ENCODE measurements at regions of chr17 and their contacts with region 1.

Region 1: DNA sequence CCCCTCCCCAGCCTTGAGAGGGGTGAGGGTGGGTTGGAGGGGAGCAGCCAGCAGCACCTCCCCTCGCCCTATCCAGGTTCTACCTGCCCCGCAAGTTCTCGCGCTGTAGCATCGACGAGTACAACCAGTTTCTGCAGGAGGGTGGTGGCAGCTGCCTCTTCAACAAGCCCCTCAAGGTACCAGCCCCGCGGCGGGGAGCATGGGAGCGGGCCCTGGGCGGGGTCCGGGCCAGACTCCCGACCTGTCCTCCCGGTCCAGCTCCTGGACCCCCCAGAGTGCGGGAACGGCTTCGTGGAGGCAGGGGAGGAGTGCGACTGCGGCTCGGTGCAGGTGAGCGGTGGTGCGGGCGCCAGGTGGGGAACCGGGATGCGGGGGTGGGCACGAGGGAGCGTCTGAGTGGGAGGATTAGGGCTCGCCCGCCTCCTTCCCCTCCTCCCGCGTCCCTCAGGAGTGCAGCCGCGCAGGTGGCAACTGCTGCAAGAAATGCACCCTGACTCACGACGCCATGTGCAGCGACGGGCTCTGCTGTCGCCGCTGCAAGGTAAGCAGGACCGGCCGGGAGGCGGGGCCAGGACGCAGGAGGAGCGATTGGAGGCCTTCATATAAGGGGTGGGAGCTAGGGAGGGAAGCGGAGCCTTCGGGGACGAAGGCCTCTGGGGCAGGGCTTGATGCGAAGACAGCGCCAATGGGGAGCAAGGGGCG is 16.5 kb downstream of the ADAM11 start:
- DNase-seq: peak; percentile 97
- H3K4me3 ChIP-seq: peak overlapping the region; percentile 34
- H3K27ac ChIP-seq: no peak overlapping the region
- H3K4me1 ChIP-seq: no peaks in the 10 kb centered on the region
- H3K27me3 ChIP-seq: no peaks in the 10 kb centered on the region
- CTCF ChIP-seq: no peak

Region 2: DNA sequence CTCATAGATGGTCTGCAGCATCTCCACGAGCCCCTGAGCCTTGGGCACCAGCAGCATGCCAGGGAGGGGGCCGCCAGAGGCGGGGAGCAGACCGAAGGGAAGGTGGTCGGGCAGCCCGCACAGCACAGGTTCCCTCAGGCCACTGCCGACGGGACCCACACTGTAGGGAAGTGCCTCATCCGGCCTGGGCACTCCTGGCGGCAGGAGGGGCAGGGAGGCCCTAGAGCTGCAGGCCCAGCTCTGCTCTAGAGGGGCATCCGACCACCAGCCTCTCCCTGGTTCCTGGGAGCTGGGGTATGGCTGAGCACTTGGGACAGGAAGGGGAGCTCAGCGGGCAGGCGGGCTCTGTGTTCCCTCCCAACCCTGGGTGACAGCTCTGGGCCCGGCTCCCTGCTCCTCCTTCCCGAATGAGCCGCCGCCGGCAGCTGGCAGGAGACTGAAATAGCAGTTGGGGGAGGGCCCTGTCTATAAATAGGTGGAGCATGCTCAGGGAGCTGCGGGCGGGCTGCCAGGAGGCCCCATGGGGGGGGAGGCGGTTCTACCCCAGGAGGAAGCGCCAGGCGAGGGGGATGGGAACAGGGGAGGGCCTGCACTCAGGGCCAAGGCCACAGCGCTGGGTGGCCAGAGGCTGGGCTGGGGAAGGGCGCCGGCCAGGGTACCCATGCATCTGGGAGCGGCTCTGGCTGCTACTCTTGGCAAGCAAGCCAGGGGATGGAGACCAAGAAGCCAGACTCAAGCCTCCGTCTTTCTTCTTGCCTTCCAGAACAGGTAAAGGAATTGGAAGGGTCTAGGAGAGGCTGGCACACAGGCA is 664.3 kb before region 1 on chr17:
- CTCF ChIA-PET with region 1: no interaction called
- POLR2A ChIA-PET with region 1: interaction called, 11 read pairs
- intact Hi-C with region 1: no loop called
- DNase-seq: peak; percentile 91
- H3K4me3 ChIP-seq: peak overlapping the region; percentile 33
- H3K27ac ChIP-seq: peak overlapping the region; percentile 59
- H3K4me1 ChIP-seq: peaks cover 38% of the 10 kb centered on the region
- H3K27me3 ChIP-seq: no peaks in the 10 kb centered on the region
- CTCF ChIP-seq: no peak

Region 3: GRCh38 chr17:44804302-44805089 is 29.2 kb after region 1 on chr17:
- CTCF ChIA-PET with region 1: no interaction called
- POLR2A ChIA-PET with region 1: no interaction called
- intact Hi-C with region 1: no loop called
- DNase-seq: no peak
- H3K4me3 ChIP-seq: no peak overlapping the region
- H3K27ac ChIP-seq: no peak overlapping the region
- H3K4me1 ChIP-seq: no peaks in the 10 kb centered on the region
- H3K27me3 ChIP-seq: no peaks in the 10 kb centered on the region
- CTCF ChIP-seq: no peak

Region 4: GRCh38 chr17:44864866-44865660 is 89.8 kb after region 1 on chr17:
- CTCF ChIA-PET with region 1: interaction called, 3 read pairs
- POLR2A ChIA-PET with region 1: no interaction called
- intact Hi-C with region 1: loop called (anchors 1 kb)
- DNase-seq: peak; percentile 68
- H3K4me3 ChIP-seq: no peak overlapping the region
- H3K27ac ChIP-seq: no peak overlapping the region
- H3K4me1 ChIP-seq: no peaks in the 10 kb centered on the region
- H3K27me3 ChIP-seq: no peaks in the 10 kb centered on the region
- CTCF ChIP-seq: peak; percentile 63

Region 5: GRCh38 chr17:44919885-44920564 is 144.7 kb after region 1 on chr17:
- CTCF ChIA-PET with region 1: interaction called, 17 read pairs
- POLR2A ChIA-PET with region 1: no interaction called
- intact Hi-C with region 1: no loop called
- DNase-seq: peak; percentile 66
- H3K4me3 ChIP-seq: no peak overlapping the region
- H3K27ac ChIP-seq: no peak overlapping the region
- H3K4me1 ChIP-seq: no peaks in the 10 kb centered on the region
- H3K27me3 ChIP-seq: no peaks in the 10 kb centered on the region
- CTCF ChIP-seq: peak; percentile 66

Region 6: DNA sequence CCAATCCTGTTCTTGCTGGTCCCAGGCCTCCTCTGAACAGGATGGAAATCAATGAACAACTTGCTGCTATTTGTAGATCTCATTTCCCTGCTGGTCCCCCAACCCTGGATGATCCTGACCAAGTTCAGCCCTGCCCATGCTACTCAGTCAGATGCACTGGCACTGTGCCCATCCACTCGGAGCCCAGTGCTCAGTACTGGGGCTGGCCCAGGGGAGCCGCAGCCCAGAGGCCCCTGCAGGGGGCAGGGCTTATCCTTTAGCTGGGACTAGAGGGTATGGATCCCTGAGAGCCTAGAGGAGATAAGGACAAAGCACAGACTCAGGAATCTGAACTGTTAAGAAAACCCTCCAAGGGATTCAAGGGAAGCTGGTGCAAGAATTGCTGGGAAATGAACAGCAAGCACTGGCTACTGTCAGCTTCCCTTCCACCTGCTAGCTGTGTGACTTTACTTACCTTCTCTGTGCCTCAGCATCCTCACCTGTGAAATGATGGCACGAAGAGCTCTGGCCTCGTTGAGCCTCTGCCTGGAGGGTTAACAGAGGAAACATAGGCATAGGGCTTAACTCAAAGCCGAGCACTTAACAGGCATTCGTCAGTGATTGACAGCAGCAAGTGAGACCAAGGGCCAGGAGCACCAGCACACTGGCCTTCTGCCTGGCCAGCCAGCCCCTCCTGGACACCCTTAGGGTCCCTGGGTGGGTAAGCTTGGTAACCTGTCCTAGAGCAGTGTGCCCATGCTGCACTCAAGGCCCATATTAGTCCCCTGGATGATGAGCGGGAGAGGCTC is 222.6 kb after region 1 on chr17:
- CTCF ChIA-PET with region 1: no interaction called
- POLR2A ChIA-PET with region 1: no interaction called
- intact Hi-C with region 1: no loop called
- DNase-seq: peak; percentile 25
- H3K4me3 ChIP-seq: no peak overlapping the region
- H3K27ac ChIP-seq: no peak overlapping the region
- H3K4me1 ChIP-seq: no peaks in the 10 kb centered on the region
- H3K27me3 ChIP-seq: no peaks in the 10 kb centered on the region
- CTCF ChIP-seq: no peak

Region 7: DNA sequence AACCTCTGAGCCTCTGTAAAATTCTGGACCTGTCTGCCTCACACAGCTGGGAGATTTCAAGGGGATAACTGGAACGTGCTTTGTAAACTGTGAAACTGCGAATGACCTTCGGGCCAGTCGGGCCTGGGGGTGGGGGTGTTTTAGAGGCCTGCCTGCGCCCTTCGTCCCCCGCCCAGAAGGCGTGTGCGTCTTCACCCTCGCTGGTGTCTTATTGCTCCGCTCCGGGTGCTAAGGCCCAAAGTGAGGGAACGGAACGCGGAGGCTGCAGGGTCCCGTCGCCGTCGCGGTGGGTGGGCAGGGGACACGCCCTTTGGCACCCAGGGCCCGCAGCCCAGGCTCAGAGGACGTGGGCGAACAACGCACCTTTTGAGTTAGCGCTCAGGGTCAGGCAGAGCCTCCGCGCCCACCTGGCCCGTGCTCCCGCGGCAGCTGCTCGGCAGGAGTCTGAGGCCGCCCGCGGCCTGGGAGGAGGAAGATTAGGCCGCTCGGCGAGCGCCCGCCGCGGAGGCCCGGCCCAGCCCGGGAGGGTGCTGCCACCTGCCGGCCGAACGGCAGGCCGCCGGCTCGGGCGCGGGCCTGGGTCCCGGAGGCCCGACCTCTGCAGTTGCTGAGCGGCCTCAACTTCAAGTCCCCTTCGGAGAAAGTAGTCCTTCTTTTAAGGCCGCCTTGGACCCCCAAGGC is 246.5 kb after region 1 on chr17:
- CTCF ChIA-PET with region 1: interaction called, 3 read pairs
- POLR2A ChIA-PET with region 1: no interaction called
- intact Hi-C with region 1: loop called (anchors 5 kb)
- DNase-seq: peak; percentile 60
- H3K4me3 ChIP-seq: peak overlapping the region; percentile 36
- H3K27ac ChIP-seq: no peak overlapping the region
- H3K4me1 ChIP-seq: no peaks in the 10 kb centered on the region
- H3K27me3 ChIP-seq: no peaks in the 10 kb centered on the region
- CTCF ChIP-seq: peak; percentile 55; the same call in 1 of the 2 replicates

Region 8: DNA sequence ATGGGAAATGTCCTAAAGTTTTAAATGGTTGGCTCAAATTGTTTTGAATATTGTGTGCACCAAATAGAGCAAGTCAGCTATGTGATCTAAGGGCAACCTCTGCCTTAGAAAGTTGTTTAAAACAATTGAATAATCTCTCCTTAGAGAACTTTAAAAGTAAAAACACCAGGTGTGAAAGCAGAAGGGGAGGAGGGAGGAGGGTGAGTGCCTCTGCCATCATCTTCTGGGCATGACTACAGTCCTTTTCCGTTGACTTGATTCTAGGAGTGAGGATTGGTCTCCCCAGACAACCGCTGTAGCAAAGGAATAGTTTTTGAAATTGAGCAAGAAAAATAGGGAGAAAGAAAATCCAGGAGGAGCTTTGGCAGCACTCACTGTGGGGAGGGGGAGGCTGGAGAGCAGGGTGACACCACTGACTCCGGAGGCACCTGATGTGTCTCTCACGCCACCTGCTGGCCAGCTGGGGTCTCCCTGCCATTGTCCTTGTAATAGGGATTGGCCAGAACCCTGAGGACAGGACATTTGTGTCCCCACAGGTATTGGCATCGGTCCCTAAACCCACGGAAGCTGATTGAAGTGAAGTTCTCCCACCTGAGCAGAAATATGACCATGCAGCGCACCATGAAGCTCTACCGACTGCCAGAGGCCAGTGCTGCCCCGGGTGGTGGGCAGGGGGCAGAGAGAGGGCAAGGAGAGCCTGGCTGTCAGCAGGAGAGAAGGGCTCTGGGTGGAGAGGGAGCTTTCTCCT is 323.8 kb after region 1 on chr17:
- CTCF ChIA-PET with region 1: no interaction called
- POLR2A ChIA-PET with region 1: no interaction called
- intact Hi-C with region 1: loop called (anchors 10 kb)
- DNase-seq: peak; percentile 63
- H3K4me3 ChIP-seq: no peak overlapping the region
- H3K27ac ChIP-seq: no peak overlapping the region
- H3K4me1 ChIP-seq: no peaks in the 10 kb centered on the region
- H3K27me3 ChIP-seq: no peaks in the 10 kb centered on the region
- CTCF ChIP-seq: peak; percentile 62